A673 (cell line): ENCODE measurements at regions of chr18 and their contacts with region 1.

Region 1: DNA sequence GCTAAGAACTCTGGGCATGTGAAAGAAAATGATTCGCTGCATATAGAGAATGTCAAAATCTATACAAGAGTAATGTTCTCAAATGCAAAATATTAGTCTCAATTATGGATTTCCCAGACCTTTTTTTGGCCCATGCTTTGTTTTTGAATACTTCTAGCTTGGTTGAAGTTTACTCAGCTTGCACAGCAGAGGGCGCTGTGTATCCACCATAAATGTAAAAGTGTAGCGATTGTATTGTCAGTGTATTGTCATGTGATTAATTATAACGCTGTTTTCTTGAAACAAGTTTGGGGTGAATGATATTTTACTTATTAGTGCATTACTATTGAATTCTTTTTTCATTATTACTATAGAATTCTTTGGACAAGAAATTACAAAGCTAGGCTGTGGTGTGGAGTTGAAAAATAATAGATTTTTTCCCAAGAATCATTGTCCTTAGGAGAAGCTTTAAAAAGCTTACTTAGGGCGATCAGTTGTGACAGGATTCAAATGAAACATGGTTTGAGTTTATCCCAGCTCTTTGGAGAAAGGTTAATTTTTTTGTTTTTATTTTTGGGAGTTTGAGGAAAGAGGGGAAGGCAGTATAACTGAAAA is 98.3 kb downstream of the PIK3C3 start:
- DNase-seq: peak; percentile 70
- H3K4me3 ChIP-seq: no peak overlapping the region
- H3K27ac ChIP-seq: peak overlapping the region; percentile 51
- H3K4me1 ChIP-seq: peaks cover 7% of the 10 kb centered on the region
- H3K27me3 ChIP-seq: no peaks in the 10 kb centered on the region
- CTCF ChIP-seq: peak; percentile 89

Region 2: GRCh38 chr18:42274488-42275137 is 221.3 kb after region 1 on chr18:
- CTCF ChIA-PET with region 1: interaction called, 3 read pairs
- POLR2A ChIA-PET with region 1: no interaction called
- intact Hi-C with region 1: loop called (anchors 2 kb)
- DNase-seq: peak; percentile 74
- H3K4me3 ChIP-seq: no peak overlapping the region
- H3K27ac ChIP-seq: peak overlapping the region; percentile 93
- H3K4me1 ChIP-seq: peaks cover 47% of the 10 kb centered on the region
- H3K27me3 ChIP-seq: no peaks in the 10 kb centered on the region
- CTCF ChIP-seq: peak; percentile 57

Region 3: GRCh38 chr18:43271593-43272432 is 1218.5 kb after region 1 on chr18:
- CTCF ChIA-PET with region 1: no interaction called
- POLR2A ChIA-PET with region 1: no interaction called
- intact Hi-C with region 1: loop called (anchors 1 kb)
- DNase-seq: peak; percentile 58
- H3K4me3 ChIP-seq: no peak overlapping the region
- H3K27ac ChIP-seq: no peak overlapping the region
- H3K4me1 ChIP-seq: no peaks in the 10 kb centered on the region
- H3K27me3 ChIP-seq: no peaks in the 10 kb centered on the region
- CTCF ChIP-seq: peak; percentile 75

Region 4: GRCh38 chr18:43563780-43564179 is 1510.5 kb after region 1 on chr18:
- CTCF ChIA-PET with region 1: interaction called, 3 read pairs
- POLR2A ChIA-PET with region 1: no interaction called
- intact Hi-C with region 1: loop called (anchors 2 kb)
- DNase-seq: peak; percentile 67
- H3K4me3 ChIP-seq: no peak overlapping the region
- H3K27ac ChIP-seq: no peak overlapping the region
- H3K4me1 ChIP-seq: no peaks in the 10 kb centered on the region
- H3K27me3 ChIP-seq: no peaks in the 10 kb centered on the region
- CTCF ChIP-seq: peak; percentile 68